Activated CD4-positive, alpha-beta T cell treated with anti-CD3 and anti-CD28 coated beads, Interleukin-2, amount 10 ng/mL, durations not matched to agents 7 days and 5 days (primary cell): ENCODE measurements at regions of chr6 and their contacts with region 1.

Region 1: DNA sequence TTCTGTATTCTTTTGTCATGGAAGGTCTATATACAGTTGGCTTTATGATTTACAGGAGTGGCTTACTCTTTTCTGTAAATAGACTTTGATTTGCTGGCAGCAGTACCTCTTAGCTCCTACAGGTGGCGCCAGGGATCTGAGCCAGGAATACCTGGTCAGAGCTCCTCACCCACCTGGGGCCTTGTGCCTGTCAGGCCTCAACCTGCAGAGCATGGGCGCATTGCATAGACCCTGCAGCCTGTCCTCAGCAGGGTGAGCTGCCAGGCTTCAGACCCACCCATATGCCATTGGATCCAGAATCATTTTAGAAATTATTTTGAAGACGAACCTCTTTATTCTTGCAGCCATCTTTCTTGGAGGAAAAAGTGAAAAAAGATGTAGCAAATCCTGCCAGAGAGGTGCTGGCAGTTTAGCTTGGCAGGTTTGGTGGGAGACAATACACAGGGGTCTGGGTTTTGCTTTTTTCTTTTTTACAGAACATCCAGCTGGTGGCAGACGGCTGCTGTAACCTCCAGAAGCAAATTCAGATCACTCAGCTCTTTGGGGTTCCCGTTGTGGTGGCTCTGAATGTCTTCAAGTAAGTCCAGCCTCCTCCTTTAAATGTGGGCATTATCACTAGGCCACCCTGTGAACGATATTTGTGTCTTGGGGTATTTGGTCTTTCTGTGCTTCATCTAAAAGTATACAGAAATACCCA is 149.1 kb downstream of the MTHFD1L start:
- DNase-seq: peak; percentile 64
- H3K4me3 Mint-ChIP-seq: no peak overlapping the region
- H3K27ac Mint-ChIP-seq: no peak overlapping the region
- H3K4me1 Mint-ChIP-seq: peaks cover 11% of the 10 kb centered on the region
- H3K27me3 Mint-ChIP-seq: no peaks in the 10 kb centered on the region

Region 2: GRCh38 chr6:150915880-150916265 is 98.7 kb before region 1 on chr6:
- CTCF ChIA-PET with region 1: no interaction called
- POLR2A ChIA-PET with region 1: no interaction called
- DNase-seq: no peak
- H3K4me3 Mint-ChIP-seq: no peak overlapping the region
- H3K27ac Mint-ChIP-seq: no peak overlapping the region
- H3K4me1 Mint-ChIP-seq: no peaks in the 10 kb centered on the region
- H3K27me3 Mint-ChIP-seq: no peaks in the 10 kb centered on the region

Region 3: DNA sequence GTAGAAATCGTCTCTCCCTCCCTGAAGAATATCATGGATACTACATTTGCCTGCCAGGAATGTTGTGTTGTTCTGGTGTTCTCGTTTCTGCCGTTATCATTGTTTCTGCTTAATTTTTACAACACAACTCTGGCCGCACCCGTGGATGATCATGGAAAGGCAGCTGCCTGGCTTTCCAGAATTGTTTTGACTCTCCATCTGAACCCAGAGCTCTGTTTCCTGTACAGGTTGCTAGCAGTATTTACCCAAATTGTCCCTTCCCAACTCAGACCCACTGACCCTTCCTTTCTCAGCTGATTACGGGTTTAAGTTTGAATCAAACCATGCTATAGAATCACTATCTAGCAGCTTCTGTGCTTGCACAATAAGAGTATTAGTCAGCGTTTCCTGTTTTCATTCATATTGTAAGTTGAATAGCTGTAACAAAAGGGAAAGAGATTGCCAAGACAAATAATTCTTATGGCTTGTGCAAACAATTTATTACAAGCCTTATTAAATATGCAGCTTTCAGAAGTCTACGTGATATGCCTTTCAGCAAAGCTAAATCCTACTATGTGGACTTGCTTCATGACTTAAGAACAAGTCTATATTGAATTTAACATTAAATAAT is 10.0 kb before region 1 on chr6:
- CTCF ChIA-PET with region 1: interaction called, 13 read pairs
- POLR2A ChIA-PET with region 1: no interaction called
- DNase-seq: no peak
- H3K4me3 Mint-ChIP-seq: no peak overlapping the region
- H3K27ac Mint-ChIP-seq: peak overlapping the region; percentile 25
- H3K4me1 Mint-ChIP-seq: peaks cover 42% of the 10 kb centered on the region
- H3K27me3 Mint-ChIP-seq: no peaks in the 10 kb centered on the region

Region 4: GRCh38 chr6:151025076-151025475 is 10.5 kb after region 1 on chr6:
- CTCF ChIA-PET with region 1: interaction called, 16 read pairs
- POLR2A ChIA-PET with region 1: no interaction called
- DNase-seq: no peak
- H3K4me3 Mint-ChIP-seq: no peak overlapping the region
- H3K27ac Mint-ChIP-seq: no peak overlapping the region
- H3K4me1 Mint-ChIP-seq: peaks cover 6% of the 10 kb centered on the region
- H3K27me3 Mint-ChIP-seq: no peaks in the 10 kb centered on the region

Region 5: GRCh38 chr6:151323791-151324487 is 309.4 kb after region 1 on chr6:
- CTCF ChIA-PET with region 1: interaction called, 44 read pairs
- POLR2A ChIA-PET with region 1: no interaction called
- DNase-seq: peak; percentile 75
- H3K4me3 Mint-ChIP-seq: no peak overlapping the region
- H3K27ac Mint-ChIP-seq: no peak overlapping the region
- H3K4me1 Mint-ChIP-seq: peaks cover 23% of the 10 kb centered on the region
- H3K27me3 Mint-ChIP-seq: peaks cover 47% of the 10 kb centered on the region